ENCODE measurements at regions of chr5 and their contacts with region 1.

Region 1: DNA sequence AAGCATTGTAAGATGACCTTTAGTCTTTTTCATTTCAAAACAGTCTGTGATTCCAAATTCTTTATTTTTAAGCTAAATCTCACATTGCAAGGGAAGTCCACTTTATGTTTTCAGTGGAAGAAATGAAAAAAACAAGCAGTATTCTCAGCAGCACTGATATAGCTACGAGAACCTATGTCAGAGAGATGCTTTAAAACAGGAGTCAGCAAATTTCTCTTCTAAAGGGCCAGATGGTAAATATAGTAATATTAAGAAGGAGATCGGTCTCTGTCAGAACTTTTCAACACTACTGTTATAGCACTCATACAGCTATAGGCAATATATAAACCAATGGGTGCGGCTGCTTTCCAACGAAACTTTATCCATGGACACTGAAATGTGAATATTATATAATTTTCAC is 18.7 kb downstream of the IL31RA start:
- DNase-seq: no peak
- H3K4me3 ChIP-seq: no peak overlapping the region
- H3K27ac ChIP-seq: no peak overlapping the region
- H3K4me1 ChIP-seq: no peaks in the 10 kb centered on the region
- H3K27me3 ChIP-seq: no peaks in the 10 kb centered on the region
- CTCF ChIP-seq: no peak
- POLR2A ChIP-seq: no peak

Region 2: GRCh38 chr5:55856516-55857246 is 13.2 kb before region 1 on chr5:
- intact Hi-C with region 1: loop called (anchors 1 kb)
- DNase-seq: no peak
- H3K4me3 ChIP-seq: no peak overlapping the region
- H3K27ac ChIP-seq: no peak overlapping the region
- H3K4me1 ChIP-seq: no peaks in the 10 kb centered on the region
- H3K27me3 ChIP-seq: no peaks in the 10 kb centered on the region
- CTCF ChIP-seq: no peak
- POLR2A ChIP-seq: no peak

Region 3: DNA sequence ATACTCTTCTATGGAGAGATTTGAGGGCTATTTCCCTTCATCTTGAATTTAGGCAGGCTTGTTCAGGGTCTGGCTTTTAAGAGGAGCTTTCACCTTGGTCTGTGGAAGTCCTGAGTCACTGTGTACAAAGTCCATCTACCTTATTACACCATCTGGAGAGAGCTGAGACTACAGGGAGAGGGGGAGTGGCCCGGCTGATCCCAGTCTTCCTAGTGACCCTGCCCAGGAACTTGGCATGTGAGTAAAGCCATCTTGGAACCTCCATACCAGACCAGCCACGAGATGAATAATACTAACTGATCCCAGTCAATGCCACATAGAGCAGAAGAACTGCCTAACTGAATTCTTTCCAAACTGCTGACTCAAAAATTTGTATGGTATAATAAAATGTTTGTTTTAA is 133.3 kb after region 1 on chr5:
- intact Hi-C with region 1: no loop called
- DNase-seq: no peak
- H3K4me3 ChIP-seq: no peak overlapping the region
- H3K27ac ChIP-seq: peak overlapping the region; percentile 49 to 58
- H3K4me1 ChIP-seq: no peaks in the 10 kb centered on the region
- H3K27me3 ChIP-seq: no peaks in the 10 kb centered on the region
- CTCF ChIP-seq: no peak
- POLR2A ChIP-seq: no peak